HCT116 (cell line): ENCODE measurements at regions of chr1 and their contacts with region 1.

Region 1: DNA sequence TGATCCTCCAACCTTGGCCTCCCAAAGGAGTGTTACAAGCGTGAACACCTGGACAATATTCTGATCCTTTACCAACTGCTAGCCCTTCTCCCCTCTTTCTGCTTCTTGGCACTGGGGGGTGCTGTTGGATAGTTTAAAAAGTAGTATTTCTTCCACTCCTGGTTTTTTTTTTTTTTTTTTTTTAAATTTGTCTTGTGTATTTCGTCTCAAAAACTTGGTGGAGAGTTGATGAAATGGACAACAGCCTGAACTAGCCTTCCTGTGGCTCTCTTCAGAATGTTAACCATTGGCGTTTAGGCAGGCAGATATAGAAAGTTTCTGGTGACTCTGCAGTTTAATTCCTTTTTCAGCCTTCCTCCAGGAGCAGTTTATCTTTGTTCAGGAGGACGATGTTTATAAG is 69.7 kb upstream of the USP24 start:
- DNase-seq: peak; percentile 29
- ATAC-seq: peak; percentile 81
- H3K4me3 ChIP-seq: no peak overlapping the region
- H3K27ac ChIP-seq: no peak overlapping the region
- H3K4me1 ChIP-seq: peaks cover 0 to 14% of the 10 kb centered on the region in 2 experiments; a peak in 1 of 4 replicates
- H3K27me3 ChIP-seq: no peaks in the 10 kb centered on the region
- CTCF ChIP-seq: peak; percentile 53 to 76 (median 73)
- POLR2A ChIP-seq: no peak
- RAD21 ChIP-seq: peak; percentile 82

Region 2: GRCh38 chr1:55413286-55413685 is 128.4 kb after region 1 on chr1:
- CTCF ChIA-PET with region 1: no interaction called
- POLR2A ChIA-PET with region 1: no interaction called
- RAD21 ChIA-PET with region 1: no interaction called
- intact Hi-C with region 1: no loop called
- DNase-seq: no peak
- ATAC-seq: no peak
- H3K4me3 ChIP-seq: no peak overlapping the region
- H3K27ac ChIP-seq: no peak overlapping the region
- H3K4me1 ChIP-seq: no peaks in the 10 kb centered on the region
- H3K27me3 ChIP-seq: no peaks in the 10 kb centered on the region
- CTCF ChIP-seq: no peak
- POLR2A ChIP-seq: no peak
- RAD21 ChIP-seq: no peak

Region 3: DNA sequence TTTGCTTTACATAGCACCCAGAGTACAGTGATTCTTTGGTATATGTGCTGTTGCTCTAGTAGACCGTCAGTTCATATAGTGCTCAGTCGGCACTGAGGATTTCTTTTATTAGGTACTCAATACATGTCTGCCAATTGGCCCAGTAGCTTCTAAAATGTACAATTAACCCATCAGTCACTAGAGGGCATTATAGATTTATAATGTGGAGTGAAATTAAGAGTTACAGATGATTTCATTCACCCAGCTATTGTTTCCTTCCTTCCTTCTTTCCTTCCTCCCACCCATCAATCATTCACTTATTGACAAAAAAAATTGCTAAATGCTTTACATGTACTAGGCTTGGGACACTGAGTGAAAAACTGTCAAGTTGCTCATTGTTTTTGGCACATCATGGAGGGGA is 193.9 kb after region 1 on chr1:
- CTCF ChIA-PET with region 1: interaction called, 3 read pairs
- POLR2A ChIA-PET with region 1: no interaction called
- RAD21 ChIA-PET with region 1: interaction called in 1 of 2 experiments, 3 read pairs
- intact Hi-C with region 1: loop called (anchors 5 kb)
- DNase-seq: peak; percentile 15
- ATAC-seq: peak; percentile 62
- H3K4me3 ChIP-seq: no peak overlapping the region
- H3K27ac ChIP-seq: no peak overlapping the region
- H3K4me1 ChIP-seq: peaks cover 0 to 12% of the 10 kb centered on the region in 2 experiments; a peak in 1 of 4 replicates
- H3K27me3 ChIP-seq: no peaks in the 10 kb centered on the region
- CTCF ChIP-seq: peak in 2 of 3 experiments; percentile 53 to 54; a peak in 3 of 6 replicates
- POLR2A ChIP-seq: no peak
- RAD21 ChIP-seq: peak; percentile 66

Region 4: DNA sequence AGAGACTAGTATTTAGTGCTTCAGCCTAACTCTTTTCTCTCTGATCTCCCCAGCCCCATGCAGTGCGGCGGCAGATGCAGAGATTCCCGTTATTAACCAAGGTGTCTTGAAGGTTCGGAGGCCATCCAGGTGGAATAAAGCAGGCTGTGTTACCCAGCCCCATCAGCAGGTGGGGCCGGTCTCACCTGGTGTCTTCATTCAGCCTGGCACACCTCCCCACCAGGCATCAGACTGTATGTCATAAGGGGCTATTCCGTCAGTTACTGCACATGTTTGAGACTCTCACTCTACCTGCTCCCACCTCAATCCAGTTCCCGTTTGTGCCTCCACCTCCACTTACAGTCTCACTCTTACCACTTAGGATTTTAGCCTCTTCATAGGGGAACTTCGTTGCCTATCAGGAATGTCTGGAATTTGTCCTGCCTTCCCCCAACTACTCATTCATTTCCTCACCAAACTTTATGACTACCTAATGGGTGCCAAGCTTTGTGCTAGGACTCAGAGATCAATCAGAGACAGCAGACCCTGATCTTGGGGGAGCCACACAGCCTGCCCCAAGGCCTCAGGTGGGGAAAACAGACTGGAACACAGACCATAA is 1124.3 kb after region 1 on chr1:
- CTCF ChIA-PET with region 1: no interaction called
- POLR2A ChIA-PET with region 1: no interaction called
- RAD21 ChIA-PET with region 1: no interaction called
- intact Hi-C with region 1: loop called (anchors 2 kb)
- DNase-seq: peak; percentile 47
- ATAC-seq: peak; percentile 96
- H3K4me3 ChIP-seq: no peak overlapping the region
- H3K27ac ChIP-seq: no peak overlapping the region
- H3K4me1 ChIP-seq: peaks cover 0 to 9% of the 10 kb centered on the region in 2 experiments; a peak in 2 of 4 replicates
- H3K27me3 ChIP-seq: no peaks in the 10 kb centered on the region
- CTCF ChIP-seq: peak; percentile 71 to 79 (median 74)
- POLR2A ChIP-seq: no peak
- RAD21 ChIP-seq: peak; percentile 78

Region 5: GRCh38 chr1:56709269-56709880 is 1424.5 kb after region 1 on chr1:
- CTCF ChIA-PET with region 1: no interaction called
- POLR2A ChIA-PET with region 1: no interaction called
- RAD21 ChIA-PET with region 1: no interaction called
- intact Hi-C with region 1: loop called (anchors 2 kb)
- DNase-seq: peak; percentile 45
- ATAC-seq: peak; percentile 88
- H3K4me3 ChIP-seq: no peak overlapping the region
- H3K27ac ChIP-seq: no peak overlapping the region
- H3K4me1 ChIP-seq: peaks cover 0 to 5% of the 10 kb centered on the region in 2 experiments; a peak in 2 of 4 replicates
- H3K27me3 ChIP-seq: peaks cover 33% of the 10 kb centered on the region
- CTCF ChIP-seq: peak; percentile 26 to 59 (median 43); a peak in 4 of 6 replicates
- POLR2A ChIP-seq: no peak
- RAD21 ChIP-seq: peak; percentile 68

Region 6: DNA sequence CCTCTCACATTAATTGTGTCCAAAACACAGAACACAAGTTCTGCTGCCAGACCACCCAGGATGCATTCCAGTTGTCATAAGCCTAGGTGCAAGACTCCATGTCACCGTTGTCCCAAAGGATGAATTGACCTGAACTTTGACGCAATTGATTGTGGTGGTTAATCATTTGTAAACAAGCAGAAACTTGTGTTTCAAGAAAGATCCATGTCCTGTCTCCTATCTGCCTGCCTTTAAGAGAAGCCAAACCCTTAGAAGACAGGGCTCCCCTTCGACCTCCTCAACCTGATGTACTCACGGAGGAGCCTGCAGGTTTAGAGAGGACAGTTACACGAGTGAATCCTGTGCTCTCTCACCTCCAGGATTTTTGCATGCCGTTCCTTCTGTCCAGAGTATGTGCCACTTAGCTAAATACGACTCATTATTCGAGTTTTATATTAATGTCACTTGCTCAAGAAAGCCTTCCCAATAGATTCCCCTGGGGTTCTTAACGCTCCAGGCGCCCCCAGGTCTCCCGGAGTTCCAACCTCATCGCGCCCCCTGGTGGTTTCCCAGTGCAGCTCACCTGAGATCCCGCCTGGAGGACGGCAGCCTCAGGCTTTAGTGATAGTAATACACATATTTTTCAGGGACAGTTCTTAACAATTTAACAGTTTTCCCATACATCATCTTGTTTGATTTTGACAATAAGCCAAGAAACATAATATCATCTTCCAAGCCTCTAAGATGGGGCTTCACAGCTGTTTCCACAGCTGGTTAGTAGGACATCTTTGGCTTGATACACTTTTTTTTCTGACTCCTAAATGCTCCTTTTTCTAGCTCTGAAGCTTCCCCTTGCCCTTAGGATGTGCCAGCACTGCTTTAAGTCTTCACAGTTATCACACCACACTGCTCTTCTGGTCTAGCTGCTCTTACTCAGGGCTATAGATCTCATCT is 1683.3 kb after region 1 on chr1:
- CTCF ChIA-PET with region 1: no interaction called
- POLR2A ChIA-PET with region 1: no interaction called
- RAD21 ChIA-PET with region 1: no interaction called
- intact Hi-C with region 1: loop called (anchors 10 kb)
- DNase-seq: peak; percentile 7
- ATAC-seq: peak; percentile 69
- H3K4me3 ChIP-seq: no peak overlapping the region
- H3K27ac ChIP-seq: no peak overlapping the region
- H3K4me1 ChIP-seq: no peaks in the 10 kb centered on the region
- H3K27me3 ChIP-seq: peaks cover 8% of the 10 kb centered on the region; the same call in 1 of the 2 replicates
- CTCF ChIP-seq: peak in 2 of 3 experiments; percentile 72 to 82; a peak in 4 of 6 replicates
- POLR2A ChIP-seq: no peak
- RAD21 ChIP-seq: peak; percentile 45